Pancreas (tissue), 10 donors: ENCODE measurements at regions of chr4 and their contacts with region 1.

Region 1: DNA sequence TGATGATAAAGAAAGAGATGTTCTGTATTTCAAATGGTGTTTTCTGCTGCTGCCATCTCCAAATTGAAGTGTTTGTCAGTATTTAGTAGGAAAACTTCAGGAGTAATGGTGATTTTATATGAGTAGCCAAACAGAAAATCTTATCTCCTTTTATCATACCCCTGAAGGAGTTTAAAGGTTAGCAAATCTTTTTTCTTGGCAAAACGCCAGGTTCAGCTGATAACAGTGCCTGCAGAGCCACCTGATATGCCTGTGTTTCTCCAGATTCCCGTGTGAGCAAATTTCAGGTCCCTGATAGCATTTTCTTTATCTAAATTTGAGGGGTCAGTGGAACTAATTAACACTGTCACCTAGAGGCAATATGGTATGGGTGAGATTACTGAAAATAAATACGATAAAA is 65.8 kb upstream of the ETNPPL start:
- DNase-seq: no peak
- ATAC-seq: peak in 3 of 4 donors; percentile 48 to 56 (median 53)
- H3K4me3 ChIP-seq: no peak overlapping the region
- H3K27ac ChIP-seq: no peak overlapping the region
- H3K4me1 ChIP-seq: peaks cover 0 to 4% (median 0%) of the 10 kb centered on the region in 3 donors
- H3K27me3 ChIP-seq: peaks cover 0 to 6% (median 0%) of the 10 kb centered on the region in 4 donors
- CTCF ChIP-seq: no peak

Region 2: DNA sequence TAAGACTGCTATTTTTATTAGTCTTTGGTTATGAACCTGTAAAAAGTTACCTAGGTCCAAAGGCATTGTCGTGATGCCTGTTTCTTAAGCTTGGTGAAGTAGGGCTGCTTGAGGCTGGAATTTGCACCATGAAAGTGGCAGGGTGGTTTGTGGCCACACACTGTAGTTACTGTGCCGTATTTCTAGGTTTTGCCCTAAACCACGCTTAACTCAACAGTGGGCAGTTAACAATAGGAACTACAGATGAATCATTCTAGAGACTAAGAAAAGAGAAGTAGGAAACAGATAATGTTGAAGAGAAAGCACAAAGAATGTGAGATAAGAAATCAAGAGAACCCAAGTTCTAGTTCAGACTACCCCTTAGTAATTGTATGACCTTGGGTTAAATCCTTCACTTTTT is 77.3 kb before region 1 on chr4:
- intact Hi-C with region 1: no loop called
- DNase-seq: no peak
- ATAC-seq: no peak
- H3K4me3 ChIP-seq: no peak overlapping the region
- H3K27ac ChIP-seq: no peak overlapping the region
- H3K4me1 ChIP-seq: no peaks in the 10 kb centered on the region
- H3K27me3 ChIP-seq: no peaks in the 10 kb centered on the region
- CTCF ChIP-seq: no peak

Region 3: DNA sequence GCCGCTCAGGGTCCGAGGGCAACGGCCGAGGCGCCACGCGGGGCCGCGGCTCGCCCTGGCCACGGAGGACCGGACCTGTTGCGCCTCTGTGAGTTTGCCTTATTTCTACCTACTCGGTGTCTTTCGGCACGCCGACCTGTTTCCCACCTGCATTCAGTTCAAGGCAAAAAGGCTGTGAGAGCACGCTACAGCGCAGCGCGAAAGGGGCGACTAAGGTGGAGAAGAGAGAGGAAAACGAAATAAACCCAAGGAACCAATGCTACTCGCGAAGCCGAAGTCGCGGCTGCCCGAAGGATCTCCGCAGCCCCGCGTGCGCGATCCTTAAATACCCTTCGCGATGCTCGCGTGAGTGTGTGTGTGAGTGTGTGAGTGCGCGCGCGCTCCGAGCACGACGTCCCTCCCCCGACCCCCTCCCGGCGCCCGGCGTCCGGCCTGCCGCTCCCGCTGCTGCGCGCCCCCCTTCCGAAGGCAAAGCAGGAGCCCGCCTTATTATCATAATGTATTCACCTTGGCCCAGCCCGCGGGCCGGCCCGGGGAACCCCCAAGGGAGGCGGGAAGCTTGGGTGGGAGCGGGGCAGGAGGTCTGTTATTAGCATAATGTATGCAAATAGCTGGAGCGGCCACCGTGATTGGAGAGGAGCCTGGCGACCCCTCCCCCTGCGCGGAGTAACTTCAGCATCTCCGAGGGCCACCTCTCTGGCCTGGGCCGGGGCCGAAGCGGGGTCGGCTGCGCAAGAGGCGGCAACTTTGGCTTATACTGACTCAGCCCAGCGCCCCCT is 473.9 kb after region 1 on chr4 and contains the start of gene COL25A1:
- intact Hi-C with region 1: loop called in 1 of 3 experiments (anchors 10 kb)
- DNase-seq: peak; percentile 34 to 76 (median 44)
- ATAC-seq: peak; percentile 73 to 87 (median 80)
- H3K4me3 ChIP-seq: peak within 1 kb of the TSS; percentile 18 to 65 (median 33)
- H3K27ac ChIP-seq: no peak within 1 kb of the TSS
- H3K4me1 ChIP-seq: peaks cover 0 to 6% (median 6%) of the 10 kb centered on the region in 3 donors
- H3K27me3 ChIP-seq: peaks cover 0 to 29% (median 11%) of the 10 kb centered on the region in 4 donors
- CTCF ChIP-seq: no peak
- total RNA-seq, gene COL25A1: 0.16 to 0.46 (median 0.24) TPM